WTC11 (cell line): ENCODE measurements at regions of chr5 and their contacts with region 1.

Region 1: DNA sequence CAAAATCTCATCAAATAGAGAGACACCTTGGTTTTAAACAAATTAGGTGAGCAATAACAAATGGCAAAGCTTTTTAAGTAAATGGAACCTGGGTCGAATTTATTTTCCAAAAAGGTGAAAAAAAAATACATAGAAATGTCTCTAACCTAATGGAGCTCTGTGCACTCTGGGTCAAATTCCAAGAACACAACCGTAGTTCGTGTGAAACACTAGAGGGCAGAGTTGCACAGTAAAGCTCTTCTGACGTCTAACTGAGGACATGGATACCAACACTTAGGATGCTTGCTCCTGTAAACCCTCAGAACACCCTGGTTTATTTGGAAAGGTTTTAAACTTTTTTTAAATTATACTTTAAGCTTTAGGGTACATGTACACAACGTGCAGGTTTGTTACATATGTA is 18.9 kb downstream of the MARCHF11 start:
- DNase-seq: no peak
- ATAC-seq: peak; percentile 99
- H3K4me3 Mint-ChIP-seq: no peak overlapping the region
- H3K27ac Mint-ChIP-seq: no peak overlapping the region
- H3K4me1 Mint-ChIP-seq: no peaks in the 10 kb centered on the region
- H3K27me3 Mint-ChIP-seq: no peaks in the 10 kb centered on the region
- CTCF ChIP-seq: peak; percentile 54

Region 2: DNA sequence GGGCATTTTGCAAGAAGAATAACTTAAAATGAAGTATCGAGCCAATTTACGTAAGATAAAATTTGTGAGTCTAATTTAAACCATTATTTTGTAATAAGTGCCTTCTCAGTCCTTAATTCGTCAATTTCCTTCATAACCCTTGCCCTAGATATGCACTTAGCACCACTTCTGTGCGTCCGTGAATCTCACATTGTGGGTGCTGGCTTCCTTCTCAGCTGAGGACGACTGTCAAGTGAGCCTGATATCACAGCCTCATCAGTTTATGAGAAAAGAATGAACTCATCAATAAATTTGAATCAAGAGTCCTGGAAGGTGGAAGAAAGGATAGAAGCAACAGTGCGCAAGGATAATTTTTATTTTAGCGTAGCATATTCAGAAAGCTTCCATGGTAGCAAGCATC is 45.6 kb before region 1 on chr5:
- CTCF ChIA-PET with region 1: no interaction called
- POLR2A ChIA-PET with region 1: no interaction called
- DNase-seq: no peak
- ATAC-seq: no peak
- H3K4me3 Mint-ChIP-seq: no peak overlapping the region
- H3K27ac Mint-ChIP-seq: no peak overlapping the region
- H3K4me1 Mint-ChIP-seq: no peaks in the 10 kb centered on the region
- H3K27me3 Mint-ChIP-seq: no peaks in the 10 kb centered on the region
- CTCF ChIP-seq: no peak

Region 3: DNA sequence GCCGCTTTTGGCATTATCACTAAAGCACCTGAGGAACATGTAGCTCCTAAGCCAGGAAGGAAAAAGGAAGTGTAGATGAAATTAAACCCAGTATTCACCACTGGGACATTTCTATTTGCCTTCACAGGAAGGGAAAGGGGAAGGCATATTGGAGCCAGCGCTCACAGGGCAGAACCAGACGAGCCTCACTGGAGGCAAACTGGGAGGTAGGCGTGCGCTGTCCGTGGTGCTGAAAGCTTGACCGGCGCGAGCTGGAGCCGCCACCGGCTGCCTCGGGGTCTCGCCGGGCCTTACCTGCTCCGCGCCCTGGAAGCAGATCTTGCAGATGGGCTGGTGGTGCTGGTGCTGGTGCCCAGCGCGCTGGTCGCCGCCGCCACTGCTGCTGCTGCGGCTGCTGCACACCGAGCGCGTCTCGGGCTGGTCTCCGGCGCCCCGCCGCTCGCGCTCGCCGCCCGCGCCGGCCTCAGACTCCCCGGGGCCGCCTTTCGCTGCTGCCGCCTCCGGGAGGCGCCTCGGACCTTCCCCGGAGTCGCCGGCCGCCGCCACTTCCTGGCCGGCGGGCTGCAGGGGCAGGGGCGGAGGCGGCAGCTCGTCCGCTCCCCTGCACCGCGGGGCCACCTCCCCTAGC is 18.2 kb after region 1 on chr5:
- CTCF ChIA-PET with region 1: interaction called, 15 read pairs
- POLR2A ChIA-PET with region 1: no interaction called
- DNase-seq: peak; percentile 96
- ATAC-seq: peak; percentile 88
- H3K4me3 Mint-ChIP-seq: peak overlapping the region; percentile 57
- H3K27ac Mint-ChIP-seq: no peak overlapping the region
- H3K4me1 Mint-ChIP-seq: peaks cover 13% of the 10 kb centered on the region
- H3K27me3 Mint-ChIP-seq: peaks cover 54% of the 10 kb centered on the region
- CTCF ChIP-seq: no peak

Region 4: GRCh38 chr5:16508730-16509531 is 348.2 kb after region 1 on chr5:
- CTCF ChIA-PET with region 1: interaction called, 10 read pairs
- POLR2A ChIA-PET with region 1: no interaction called
- DNase-seq: peak; percentile 43
- ATAC-seq: peak; percentile 97
- H3K4me3 Mint-ChIP-seq: no peak overlapping the region
- H3K27ac Mint-ChIP-seq: no peak overlapping the region; the same call in 1 of the 2 replicates
- H3K4me1 Mint-ChIP-seq: peaks cover 11% of the 10 kb centered on the region
- H3K27me3 Mint-ChIP-seq: no peaks in the 10 kb centered on the region
- CTCF ChIP-seq: no peak